ENCODE measurements at regions of chr3 and their contacts with region 1.

Region 1: DNA sequence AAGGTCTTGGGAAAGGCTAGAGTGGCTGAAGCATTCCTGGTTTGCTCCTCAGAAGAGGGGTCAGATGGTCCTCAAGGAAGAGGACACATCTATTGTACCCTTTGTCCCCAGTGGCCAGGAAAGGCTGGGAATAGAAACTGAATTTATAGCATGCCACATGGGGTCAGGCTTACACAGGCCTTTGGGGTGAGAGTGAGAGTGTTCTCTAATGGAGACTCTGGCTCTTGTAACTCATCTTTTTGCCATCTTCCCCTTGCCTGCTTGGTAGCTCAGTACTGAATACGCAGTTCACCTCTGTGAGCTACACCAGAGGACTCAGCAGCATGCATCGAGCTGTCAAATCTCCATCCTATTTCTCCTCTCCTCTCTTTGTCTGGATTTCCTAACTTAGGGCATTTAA is 87.5 kb downstream of the ATP2B2 start:
- DNase-seq: peak; percentile 44
- H3K4me3 Mint-ChIP-seq: no peak overlapping the region
- H3K27ac Mint-ChIP-seq: no peak overlapping the region
- H3K4me1 Mint-ChIP-seq: peaks cover 8% of the 10 kb centered on the region
- H3K27me3 Mint-ChIP-seq: peaks cover 6% of the 10 kb centered on the region

Region 2: DNA sequence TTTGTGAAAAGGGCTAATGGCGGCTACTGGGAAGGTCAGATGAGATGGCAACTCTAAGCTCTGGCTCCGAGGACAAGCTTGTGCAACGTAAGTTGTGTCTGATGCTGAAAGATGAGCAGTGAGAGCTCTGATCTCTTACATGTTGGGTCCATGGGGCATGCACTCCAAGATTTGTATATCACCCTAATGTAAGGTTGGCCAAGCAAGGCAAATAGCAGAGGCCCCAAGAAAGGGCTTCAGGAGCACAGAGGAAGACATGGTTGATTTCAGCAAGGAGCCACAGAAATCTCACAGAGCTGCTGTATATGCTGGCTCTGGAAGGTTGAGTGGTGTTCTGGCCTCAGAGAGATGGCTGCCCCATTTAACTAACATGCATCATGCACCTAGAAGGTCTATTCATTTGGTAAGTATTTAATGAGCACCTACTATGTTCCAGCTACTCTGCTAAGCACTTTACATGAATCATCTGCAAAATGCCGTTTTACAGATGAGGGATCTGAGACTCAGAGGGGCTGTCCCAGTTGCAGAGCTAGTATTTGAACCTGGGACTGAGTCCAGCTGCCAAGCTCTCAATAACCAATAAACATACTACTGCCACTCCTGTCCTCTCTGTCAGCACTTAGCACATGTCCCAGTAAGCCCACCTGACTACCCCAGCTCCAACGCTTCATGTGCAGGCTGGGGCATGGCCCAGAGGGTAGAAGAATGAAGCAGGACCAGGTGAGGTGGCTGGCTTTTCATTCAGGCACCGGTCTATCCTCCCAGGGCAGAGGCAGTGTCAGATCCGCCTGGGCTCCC is 115.3 kb after region 1 on chr3:
- CTCF ChIA-PET with region 1: no interaction called
- intact Hi-C with region 1: no loop called
- DNase-seq: no peak
- H3K4me3 Mint-ChIP-seq: no peak overlapping the region
- H3K27ac Mint-ChIP-seq: no peak overlapping the region
- H3K4me1 Mint-ChIP-seq: no peaks in the 10 kb centered on the region
- H3K27me3 Mint-ChIP-seq: peaks cover 8% of the 10 kb centered on the region

Region 3: GRCh38 chr3:10703875-10704274 is 286.0 kb after region 1 on chr3:
- CTCF ChIA-PET with region 1: no interaction called
- intact Hi-C with region 1: loop called (anchors 5 kb)
- DNase-seq: peak; percentile 24
- H3K4me3 Mint-ChIP-seq: no peak overlapping the region
- H3K27ac Mint-ChIP-seq: no peak overlapping the region
- H3K4me1 Mint-ChIP-seq: peaks cover 5% of the 10 kb centered on the region
- H3K27me3 Mint-ChIP-seq: peaks cover 47% of the 10 kb centered on the region

Measured in activated naive CD4-positive, alpha-beta T cell treated with anti-CD3 and anti-CD28 coated beads for 36 hours (primary cell).